Head of caudate nucleus (tissue), 42 donors: ENCODE measurements at regions of chr4 and their contacts with region 1.

Region 1: DNA sequence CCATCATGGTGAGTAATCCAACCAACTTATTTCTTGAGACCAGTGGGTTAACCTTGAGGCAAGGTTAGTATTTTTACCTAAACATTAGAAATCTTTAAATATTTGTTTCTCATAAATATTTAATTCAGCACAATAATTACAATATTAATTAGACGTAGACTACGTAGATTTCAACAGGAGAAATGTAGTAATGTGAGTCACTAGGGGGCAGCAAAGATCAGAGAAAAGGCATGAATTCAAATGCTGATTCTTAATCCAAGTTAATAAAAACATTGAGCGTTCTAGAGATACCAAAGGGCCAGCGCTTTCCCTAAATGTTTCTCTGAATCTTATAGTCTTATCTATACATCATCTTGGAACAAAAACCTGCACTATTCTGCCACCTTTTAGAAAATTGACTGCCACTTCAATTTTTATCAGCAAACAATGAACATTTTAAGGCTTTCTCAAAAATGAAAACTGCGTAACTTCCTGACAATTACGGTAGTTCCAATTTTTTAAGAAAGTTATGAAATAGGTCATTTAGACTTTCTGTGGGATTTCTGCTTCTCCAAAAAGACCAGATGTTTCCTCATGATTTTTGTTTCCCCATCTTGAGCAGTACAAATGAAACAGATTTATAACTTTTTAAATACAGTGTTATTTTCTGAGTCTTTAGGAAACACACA is 180.7 kb downstream of the GASK1B start:
- DNase-seq: peak in 22 of 42 donors; percentile 4 to 89 (median 68)

Region 2: GRCh38 chr4:158170691-158171561 is 178.8 kb after region 1 on chr4:
- intact Hi-C with region 1: loop called (anchors 2 kb)
- DNase-seq: peak in 16 of 42 donors; percentile 11 to 68 (median 42)